ENCODE measurements at regions of chr11 and their contacts with region 1.

Region 1: DNA sequence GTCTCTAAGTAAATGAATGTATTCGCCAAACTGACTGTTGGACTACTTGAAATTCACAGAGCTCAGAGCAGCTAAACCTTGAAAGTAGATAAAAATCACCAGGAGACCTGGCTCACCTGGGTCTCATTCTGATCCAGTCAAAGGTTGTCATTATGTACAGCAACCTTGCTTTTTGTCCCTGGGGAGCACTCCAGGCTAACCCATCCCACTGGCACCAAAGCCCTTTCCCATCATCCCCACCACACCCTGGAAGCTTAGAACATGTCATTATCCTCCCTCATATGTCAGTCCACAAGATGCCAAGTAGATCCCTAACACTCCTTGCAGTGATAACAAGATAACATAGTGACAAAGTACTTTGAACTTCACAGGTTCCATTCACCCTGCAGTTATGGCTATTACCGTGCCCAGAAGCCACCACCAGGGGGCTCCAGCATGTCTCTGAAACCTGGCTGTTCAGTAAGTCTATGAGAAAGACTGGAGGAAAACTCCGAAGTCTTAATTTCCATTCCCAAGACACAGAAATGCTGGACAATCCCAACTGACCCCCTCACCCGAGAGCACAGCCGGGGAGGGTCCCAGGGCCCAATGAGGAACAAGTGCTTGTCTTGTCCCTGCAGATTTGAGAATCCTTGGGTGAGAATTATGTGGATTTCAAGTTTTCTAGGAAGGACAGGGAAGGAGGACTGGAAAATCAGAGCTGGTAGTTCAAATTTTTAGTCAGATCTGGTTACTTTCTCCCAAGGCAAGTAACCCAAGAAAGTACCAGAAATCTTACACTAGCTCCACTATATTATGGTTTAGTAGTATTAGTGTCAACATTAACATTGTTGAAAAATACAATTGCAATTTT is 43.0 kb upstream of the USP47 start:
- DNase-seq: peak; percentile 52 to 71 (median 68)
- H3K4me3 ChIP-seq: no peak overlapping the region
- H3K4me3 Mint-ChIP-seq: no peak overlapping the region
- H3K27ac ChIP-seq: no peak overlapping the region
- H3K27ac Mint-ChIP-seq: no peak overlapping the region
- H3K4me1 ChIP-seq: no peaks in the 10 kb centered on the region
- H3K4me1 Mint-ChIP-seq: no peaks in the 10 kb centered on the region
- H3K27me3 ChIP-seq: no peaks in the 10 kb centered on the region
- H3K27me3 Mint-ChIP-seq: peaks cover 21% of the 10 kb centered on the region in 2 donors

Region 2: GRCh38 chr11:11318961-11319360 is 479.9 kb before region 1 on chr11:
- CTCF ChIA-PET with region 1: no interaction called
- POLR2A ChIA-PET with region 1: no interaction called
- intact Hi-C with region 1: no loop called
- DNase-seq: no peak
- H3K4me3 ChIP-seq: no peak overlapping the region
- H3K4me3 Mint-ChIP-seq: no peak overlapping the region
- H3K27ac ChIP-seq: no peak overlapping the region
- H3K27ac Mint-ChIP-seq: no peak overlapping the region
- H3K4me1 ChIP-seq: no peaks in the 10 kb centered on the region
- H3K4me1 Mint-ChIP-seq: no peaks in the 10 kb centered on the region
- H3K27me3 ChIP-seq: no peaks in the 10 kb centered on the region
- H3K27me3 Mint-ChIP-seq: no peaks in the 10 kb centered on the region

Region 3: DNA sequence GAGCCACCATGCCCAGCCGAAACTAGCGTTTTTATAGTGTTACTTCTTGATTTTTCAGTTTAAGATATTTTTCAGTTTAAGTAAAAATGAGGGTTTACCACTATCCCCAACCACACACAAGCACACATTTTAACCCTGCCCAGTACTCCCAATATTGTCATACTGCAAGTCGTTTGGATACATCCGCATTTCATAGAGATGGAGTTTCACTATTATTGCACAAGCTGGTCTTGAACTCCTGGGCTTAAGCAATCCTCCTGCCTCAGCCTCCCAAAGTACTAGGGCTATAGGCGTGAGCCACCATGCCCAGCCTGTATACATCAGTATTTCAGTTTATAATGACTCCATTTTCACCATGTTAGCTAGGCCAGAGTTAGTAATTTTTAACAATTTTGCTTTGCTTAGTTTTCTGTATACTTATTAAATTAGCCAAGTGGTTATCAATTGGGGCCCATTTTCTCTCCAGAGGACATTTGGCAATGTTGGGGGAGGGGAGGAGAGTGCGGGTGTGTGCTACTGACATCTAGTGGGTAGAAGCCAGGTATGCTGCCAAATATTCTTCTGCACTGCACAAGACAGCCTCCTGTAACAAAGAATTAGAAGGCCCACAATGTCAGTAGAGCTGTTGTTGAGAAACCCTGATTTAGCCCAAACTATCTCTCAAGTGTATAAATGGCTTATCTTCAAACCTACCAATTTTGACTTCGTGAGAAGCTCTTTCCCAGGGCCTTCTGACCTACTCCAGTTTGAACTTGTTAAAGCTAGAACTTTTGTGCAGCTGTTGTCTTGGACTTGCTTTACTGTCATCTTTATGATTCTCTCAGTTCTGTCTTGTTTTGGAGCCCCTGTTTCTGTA is 50.3 kb after region 1 on chr11:
- CTCF ChIA-PET with region 1: interaction called, 89 read pairs
- POLR2A ChIA-PET with region 1: interaction called, 3 read pairs
- intact Hi-C with region 1: loop called (anchors 1 kb)
- DNase-seq: peak; percentile 68 to 75 (median 71)
- H3K4me3 ChIP-seq: peak overlapping the region in 1 of 2 donors; percentile 15
- H3K4me3 Mint-ChIP-seq: peak overlapping the region in 6 of 8 donors; percentile 13 to 60 (median 32)
- H3K27ac ChIP-seq: no peak overlapping the region
- H3K27ac Mint-ChIP-seq: peak overlapping the region in 6 of 7 donors; percentile 29 to 84 (median 64)
- H3K4me1 ChIP-seq: peaks cover 93% of the 10 kb centered on the region
- H3K4me1 Mint-ChIP-seq: peaks cover 45 to 71% (median 50%) of the 10 kb centered on the region in 4 donors
- H3K27me3 ChIP-seq: no peaks in the 10 kb centered on the region
- H3K27me3 Mint-ChIP-seq: no peaks in the 10 kb centered on the region

Region 4: DNA sequence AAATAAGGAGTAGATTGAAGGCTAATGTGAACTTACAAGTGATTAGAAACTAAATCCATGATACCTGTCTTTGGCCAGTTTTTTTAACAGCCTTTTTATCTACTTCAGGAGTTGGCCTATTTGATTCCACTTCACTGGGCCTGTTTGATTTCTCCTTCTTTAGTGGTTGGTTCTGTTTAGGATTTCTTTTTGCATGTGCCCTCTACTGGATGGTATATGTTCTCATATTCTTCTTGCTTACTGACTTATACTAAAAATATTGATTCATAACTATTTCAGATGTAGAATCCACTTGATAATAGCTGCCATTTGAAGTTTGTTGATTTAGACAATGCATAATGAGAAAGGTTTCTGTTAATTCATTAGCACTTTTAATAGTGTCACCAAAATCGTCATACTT is 96.9 kb after region 1 on chr11:
- CTCF ChIA-PET with region 1: interaction called, 6 read pairs
- POLR2A ChIA-PET with region 1: no interaction called
- intact Hi-C with region 1: loop called (anchors 2 kb)
- DNase-seq: no peak
- H3K4me3 ChIP-seq: no peak overlapping the region
- H3K4me3 Mint-ChIP-seq: no peak overlapping the region
- H3K27ac ChIP-seq: no peak overlapping the region
- H3K27ac Mint-ChIP-seq: peak overlapping the region in 2 of 7 donors; percentile 26 to 42
- H3K4me1 ChIP-seq: no peaks in the 10 kb centered on the region
- H3K4me1 Mint-ChIP-seq: peaks cover 1 to 9% (median 7%) of the 10 kb centered on the region in 4 donors
- H3K27me3 ChIP-seq: no peaks in the 10 kb centered on the region
- H3K27me3 Mint-ChIP-seq: no peaks in the 10 kb centered on the region

Region 5: GRCh38 chr11:12043959-12044819 is 245.4 kb after region 1 on chr11:
- CTCF ChIA-PET with region 1: interaction called, 96 read pairs
- POLR2A ChIA-PET with region 1: no interaction called
- intact Hi-C with region 1: loop called (anchors 1 kb)
- DNase-seq: peak in 4 of 5 donors; percentile 49 to 60 (median 50)
- H3K4me3 ChIP-seq: no peak overlapping the region
- H3K4me3 Mint-ChIP-seq: no peak overlapping the region
- H3K27ac ChIP-seq: no peak overlapping the region
- H3K27ac Mint-ChIP-seq: no peak overlapping the region
- H3K4me1 ChIP-seq: no peaks in the 10 kb centered on the region
- H3K4me1 Mint-ChIP-seq: peaks cover 2 to 5% (median 3%) of the 10 kb centered on the region in 4 donors
- H3K27me3 ChIP-seq: no peaks in the 10 kb centered on the region
- H3K27me3 Mint-ChIP-seq: no peaks in the 10 kb centered on the region

Measured in CD4-positive, alpha-beta memory T cell (primary cell).